Activated B cell treated with CpG ODN at 0.5 μM for 24 hours (primary cell): ENCODE measurements at regions of chr14 and their contacts with region 1.

Region 1: GRCh38 chr14:22986508-22987054 is 4.2 kb upstream of the AJUBA start:
- DNase-seq: peak; percentile 70
- ATAC-seq: peak; percentile 62
- H3K4me3 Mint-ChIP-seq: no peak overlapping the region
- H3K27ac Mint-ChIP-seq: no peak overlapping the region
- H3K4me1 Mint-ChIP-seq: no peaks in the 10 kb centered on the region
- H3K27me3 Mint-ChIP-seq: no peaks in the 10 kb centered on the region
- CTCF ChIP-seq: peak; percentile 91

Region 2: DNA sequence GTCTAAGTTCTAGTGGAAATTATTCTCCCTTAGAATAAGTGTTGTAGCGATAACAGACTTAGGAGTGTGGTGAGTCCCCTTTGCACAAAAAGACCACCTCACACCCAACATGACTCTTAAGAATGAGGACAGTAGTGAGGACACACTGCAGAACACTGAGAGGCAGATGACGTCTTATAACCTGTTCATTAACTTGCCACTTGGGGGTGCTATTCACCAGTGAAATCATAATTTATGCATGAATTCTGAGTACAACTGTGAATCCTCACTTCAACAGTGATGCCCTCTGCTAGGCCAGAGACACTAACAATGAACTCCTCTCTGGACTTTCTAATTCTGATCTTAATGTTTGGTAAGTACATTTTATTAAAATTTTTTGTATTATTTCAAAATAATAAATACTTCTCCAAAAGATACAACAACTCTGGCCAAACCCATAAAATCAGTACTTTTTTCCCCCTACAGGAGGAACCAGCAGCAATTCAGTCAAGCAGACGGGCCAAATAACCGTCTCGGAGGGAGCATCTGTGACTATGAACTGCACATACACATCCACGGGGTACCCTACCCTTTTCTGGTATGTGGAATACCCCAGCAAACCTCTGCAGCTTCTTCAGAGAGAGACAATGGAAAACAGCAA is 672.3 kb before region 1 on chr14:
- CTCF ChIA-PET with region 1: no interaction called
- POLR2A ChIA-PET with region 1: no interaction called
- intact Hi-C with region 1: loop called (anchors 2 kb)
- DNase-seq: no peak
- ATAC-seq: peak; percentile 95
- H3K4me3 Mint-ChIP-seq: no peak overlapping the region
- H3K27ac Mint-ChIP-seq: no peak overlapping the region
- H3K4me1 Mint-ChIP-seq: no peaks in the 10 kb centered on the region
- H3K27me3 Mint-ChIP-seq: no peaks in the 10 kb centered on the region
- CTCF ChIP-seq: no peak

Region 3: GRCh38 chr14:22872033-22872832 is 114.3 kb before region 1 on chr14:
- CTCF ChIA-PET with region 1: interaction called, 5 read pairs
- POLR2A ChIA-PET with region 1: interaction called, 5 read pairs
- intact Hi-C with region 1: loop called (anchors 1 kb)
- DNase-seq: peak; percentile 69
- ATAC-seq: peak; percentile 22
- H3K4me3 Mint-ChIP-seq: peak overlapping the region; percentile 89
- H3K27ac Mint-ChIP-seq: peak overlapping the region; percentile 92
- H3K4me1 Mint-ChIP-seq: peaks cover 33% of the 10 kb centered on the region
- H3K27me3 Mint-ChIP-seq: no peaks in the 10 kb centered on the region
- CTCF ChIP-seq: no peak

Region 4: GRCh38 chr14:22955702-22956569 is 30.6 kb before region 1 on chr14:
- CTCF ChIA-PET with region 1: interaction called, 5 read pairs
- POLR2A ChIA-PET with region 1: interaction called, 8 read pairs
- intact Hi-C with region 1: loop called (anchors 1 kb)
- DNase-seq: no peak
- ATAC-seq: no peak
- H3K4me3 Mint-ChIP-seq: peak overlapping the region; percentile 90
- H3K27ac Mint-ChIP-seq: peak overlapping the region; percentile 86
- H3K4me1 Mint-ChIP-seq: peaks cover 13% of the 10 kb centered on the region
- H3K27me3 Mint-ChIP-seq: no peaks in the 10 kb centered on the region
- CTCF ChIP-seq: no peak

Region 5: GRCh38 chr14:23000860-23001259 is 14.3 kb after region 1 on chr14:
- CTCF ChIA-PET with region 1: interaction called, 39 read pairs
- POLR2A ChIA-PET with region 1: interaction called, 8 read pairs
- intact Hi-C with region 1: loop called (anchors 2 kb)
- DNase-seq: no peak
- ATAC-seq: no peak
- H3K4me3 Mint-ChIP-seq: no peak overlapping the region
- H3K27ac Mint-ChIP-seq: no peak overlapping the region
- H3K4me1 Mint-ChIP-seq: peaks cover 6% of the 10 kb centered on the region
- H3K27me3 Mint-ChIP-seq: no peaks in the 10 kb centered on the region
- CTCF ChIP-seq: no peak

Region 6: GRCh38 chr14:23057757-23058653 is 71.4 kb after region 1 on chr14:
- CTCF ChIA-PET with region 1: interaction called, 284 read pairs
- POLR2A ChIA-PET with region 1: interaction called, 26 read pairs
- intact Hi-C with region 1: loop called (anchors 1 kb)
- DNase-seq: peak; percentile 80
- ATAC-seq: peak; percentile 73
- H3K4me3 Mint-ChIP-seq: peak overlapping the region; percentile 88
- H3K27ac Mint-ChIP-seq: no peak overlapping the region
- H3K4me1 Mint-ChIP-seq: peaks cover 18% of the 10 kb centered on the region
- H3K27me3 Mint-ChIP-seq: peaks cover 2% of the 10 kb centered on the region
- CTCF ChIP-seq: peak; percentile 58